ENCODE measurements at regions of chr22 and their contacts with region 1.

Region 1: DNA sequence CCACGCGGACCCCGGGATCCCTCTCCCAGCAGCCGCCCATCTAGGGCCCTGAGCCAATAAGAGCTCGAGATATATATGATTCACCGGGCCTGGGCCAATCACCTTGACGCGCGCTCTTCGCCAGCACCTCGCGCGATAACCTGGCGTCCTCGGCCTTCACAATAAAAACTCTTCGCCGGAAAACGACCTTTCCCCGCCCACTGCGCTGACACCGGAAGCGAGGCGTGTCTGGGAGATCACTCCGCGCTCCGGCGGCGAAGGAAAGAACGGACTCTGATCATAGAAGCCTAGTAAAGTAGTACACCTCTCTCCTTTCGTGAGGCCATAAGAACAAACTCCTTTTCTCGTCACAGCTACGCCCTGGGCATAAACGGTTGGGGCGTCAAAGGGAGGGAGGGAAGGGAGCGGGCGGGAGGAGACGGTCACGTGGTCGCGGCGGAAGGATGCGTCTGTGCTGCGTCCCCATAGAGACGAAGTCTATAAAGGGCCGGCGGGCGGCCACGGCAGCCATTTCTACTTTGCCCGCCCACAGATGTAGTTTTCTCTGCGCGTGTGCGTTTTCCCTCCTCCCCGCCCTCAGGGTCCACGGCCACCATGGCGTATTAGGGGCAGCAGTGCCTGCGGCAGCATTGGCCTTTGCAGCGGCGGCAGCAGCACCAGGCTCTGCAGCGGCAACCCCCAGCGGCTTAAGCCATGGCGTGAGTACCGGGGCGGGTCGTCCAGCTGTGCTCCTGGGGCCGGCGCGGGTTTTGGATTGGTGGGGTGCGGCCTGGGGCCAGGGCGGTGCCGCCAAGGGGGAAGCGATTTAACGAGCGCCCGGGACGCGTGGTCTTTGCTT is at the start of gene ATF4:
- DNase-seq: peak; percentile 92
- ATAC-seq: peak; percentile 94
- H3K4me3 Mint-ChIP-seq: peak within 1 kb of the TSS; percentile 96
- H3K27ac Mint-ChIP-seq: peak within 1 kb of the TSS; percentile 99
- H3K4me1 Mint-ChIP-seq: peaks cover 58% of the 10 kb centered on the region
- H3K27me3 Mint-ChIP-seq: no peaks in the 10 kb centered on the region
- total RNA-seq, gene ATF4: 413 to 424 TPM

Region 2: DNA sequence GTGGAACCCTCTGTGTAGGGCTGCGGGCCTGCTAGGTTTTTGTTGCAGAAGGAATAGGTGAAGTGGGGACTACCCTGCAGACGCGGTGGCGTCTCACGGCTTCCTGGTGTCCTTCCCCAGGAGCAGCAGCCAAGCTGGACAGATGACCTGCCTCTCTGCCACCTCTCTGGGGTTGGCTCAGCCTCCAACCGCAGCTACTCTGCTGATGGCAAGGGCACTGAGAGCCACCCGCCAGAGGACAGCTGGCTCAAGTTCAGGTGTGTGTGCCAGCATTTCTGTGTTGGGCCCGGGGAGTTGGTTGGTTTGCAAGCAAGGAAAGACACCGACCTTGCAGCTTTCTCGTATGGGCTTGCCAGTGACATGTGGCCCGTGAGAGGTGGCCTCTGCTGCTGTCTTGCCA is 105.4 kb before region 1 on chr22:
- POLR2A ChIA-PET with region 1: interaction called, 14 read pairs
- DNase-seq: no peak
- ATAC-seq: no peak
- H3K4me3 Mint-ChIP-seq: no peak overlapping the region
- H3K27ac Mint-ChIP-seq: no peak overlapping the region
- H3K4me1 Mint-ChIP-seq: peaks cover 41% of the 10 kb centered on the region
- H3K27me3 Mint-ChIP-seq: no peaks in the 10 kb centered on the region

Region 3: GRCh38 chr22:39490135-39490798 is 30.0 kb before region 1 on chr22:
- POLR2A ChIA-PET with region 1: interaction called, 41 read pairs
- DNase-seq: peak; percentile 61
- ATAC-seq: peak; percentile 97
- H3K4me3 Mint-ChIP-seq: no peak overlapping the region
- H3K27ac Mint-ChIP-seq: no peak overlapping the region
- H3K4me1 Mint-ChIP-seq: peaks cover 18% of the 10 kb centered on the region
- H3K27me3 Mint-ChIP-seq: no peaks in the 10 kb centered on the region

Region 4: GRCh38 chr22:39502109-39502788 is 18.0 kb before region 1 on chr22 and contains the start of gene MIEF1:
- POLR2A ChIA-PET with region 1: interaction called, 59 read pairs
- DNase-seq: peak; percentile 94
- ATAC-seq: peak; percentile 98
- H3K4me3 Mint-ChIP-seq: peak within 1 kb of the TSS; percentile 100
- H3K27ac Mint-ChIP-seq: peak within 1 kb of the TSS; percentile 98
- H3K4me1 Mint-ChIP-seq: peaks cover 36% of the 10 kb centered on the region
- H3K27me3 Mint-ChIP-seq: peaks cover 4% of the 10 kb centered on the region
- total RNA-seq, gene MIEF1: 33.9 to 40.0 TPM

Measured in activated naive CD8-positive, alpha-beta T cell treated with anti-CD3 and anti-CD28 coated beads, Interleukin-2, amount 10 ng/mL, durations not matched to agents 7 days and 5 days (primary cell).